ENCODE measurements at regions of chr15 and their contacts with region 1.

Region 1: DNA sequence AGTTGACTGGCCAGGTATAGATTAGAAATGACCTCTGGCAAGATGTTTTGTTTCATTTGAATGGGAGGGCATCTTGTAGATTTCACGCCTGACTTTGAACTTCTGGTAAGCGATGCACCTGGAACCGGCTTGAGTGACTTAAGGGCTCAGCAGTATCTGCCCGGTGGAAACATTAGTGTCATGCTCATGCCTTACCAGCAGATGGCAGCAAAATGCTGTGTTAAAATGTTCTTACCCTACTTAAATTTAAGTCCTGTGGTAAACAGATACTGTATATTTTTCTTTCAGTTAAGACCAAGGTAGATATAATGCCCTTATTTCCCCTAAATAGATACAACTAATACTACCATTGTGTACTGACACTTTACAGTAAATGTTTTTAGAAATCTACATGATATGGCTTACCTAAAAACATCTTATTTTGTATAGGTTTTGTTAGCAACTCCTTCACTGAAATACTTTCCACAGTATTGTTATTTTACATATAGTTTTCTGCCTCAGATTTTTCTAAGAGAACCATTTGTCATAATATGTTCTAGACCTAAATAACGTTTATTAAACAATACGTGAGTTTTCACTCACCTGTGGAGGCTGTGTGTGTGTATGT is 25.5 kb downstream of the ASB7 start:
- DNase-seq: peak; percentile 48
- ATAC-seq: peak; percentile 84
- H3K4me3 ChIP-seq: no peak overlapping the region
- H3K27ac ChIP-seq: no peak overlapping the region
- H3K4me1 ChIP-seq: no peaks in the 10 kb centered on the region
- H3K27me3 ChIP-seq: no peaks in the 10 kb centered on the region
- CTCF ChIP-seq: peak; percentile 79
- EP300 ChIP-seq: no peak
- POLR2A ChIP-seq: no peak
- RAD21 ChIP-seq: peak; percentile 71

Region 2: GRCh38 chr15:100565591-100565990 is 62.3 kb before region 1 on chr15:
- CTCF ChIA-PET with region 1: no interaction called
- POLR2A ChIA-PET with region 1: no interaction called
- in situ Hi-C with region 1: no loop called
- intact Hi-C with region 1: no loop called
- DNase-seq: no peak
- ATAC-seq: no peak
- H3K4me3 ChIP-seq: no peak overlapping the region
- H3K27ac ChIP-seq: no peak overlapping the region
- H3K4me1 ChIP-seq: peaks cover 19% of the 10 kb centered on the region
- H3K27me3 ChIP-seq: no peaks in the 10 kb centered on the region
- CTCF ChIP-seq: no peak
- EP300 ChIP-seq: no peak
- POLR2A ChIP-seq: no peak
- RAD21 ChIP-seq: no peak

Region 3: DNA sequence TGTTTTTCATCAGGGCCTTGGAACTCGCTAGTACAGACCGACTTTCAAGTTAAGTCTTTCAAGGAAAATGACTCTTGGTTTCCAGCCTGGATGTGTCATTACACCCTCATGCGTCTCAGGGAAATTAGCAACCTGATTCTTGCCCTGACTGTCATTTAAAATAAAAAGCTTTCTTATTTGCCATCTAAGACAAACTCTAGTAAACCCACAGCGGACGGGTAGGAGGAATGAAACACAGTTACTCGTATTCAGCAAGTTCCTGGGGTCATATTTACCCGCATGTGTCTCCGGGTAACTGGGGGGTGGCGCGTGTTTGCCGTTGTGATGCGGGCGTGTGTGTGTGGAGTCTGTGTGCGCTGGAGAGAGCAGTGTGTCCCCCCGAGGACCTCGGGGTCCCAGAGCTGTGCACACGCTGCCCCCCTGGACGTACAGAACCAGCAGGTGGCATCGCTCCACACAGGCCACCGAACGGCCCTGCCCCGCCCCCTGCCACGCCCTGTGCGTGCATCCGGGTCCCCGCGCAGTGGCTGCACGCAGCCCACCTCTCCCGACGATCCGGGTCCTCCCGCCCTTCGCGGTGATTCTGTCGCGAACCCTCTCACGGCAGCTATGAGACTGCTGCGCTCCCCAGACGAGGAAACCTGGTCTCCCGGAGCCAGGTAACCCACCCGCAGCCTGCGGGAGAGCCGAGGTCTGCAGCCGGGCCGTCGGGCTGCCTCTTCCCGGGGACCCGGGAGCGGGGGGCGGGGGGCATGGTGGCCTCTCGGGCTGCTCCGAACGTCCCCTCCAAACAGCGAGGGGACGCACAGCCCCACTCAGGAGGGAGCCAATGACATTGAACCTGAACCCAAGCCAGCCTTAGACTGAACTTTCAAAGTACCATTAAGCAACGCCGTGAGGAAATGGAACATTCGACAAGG is 221.6 kb after region 1 on chr15:
- CTCF ChIA-PET with region 1: no interaction called
- POLR2A ChIA-PET with region 1: no interaction called
- in situ Hi-C with region 1: no loop called
- intact Hi-C with region 1: no loop called
- DNase-seq: no peak
- ATAC-seq: no peak
- H3K4me3 ChIP-seq: no peak overlapping the region
- H3K27ac ChIP-seq: no peak overlapping the region
- H3K4me1 ChIP-seq: no peaks in the 10 kb centered on the region; the same call in none of the 2 replicates
- H3K27me3 ChIP-seq: peaks cover 0 to 6% of the 10 kb centered on the region in 2 experiments; a peak in 1 of 5 replicates
- CTCF ChIP-seq: no peak
- EP300 ChIP-seq: no peak
- POLR2A ChIP-seq: no peak
- RAD21 ChIP-seq: no peak

Region 4: DNA sequence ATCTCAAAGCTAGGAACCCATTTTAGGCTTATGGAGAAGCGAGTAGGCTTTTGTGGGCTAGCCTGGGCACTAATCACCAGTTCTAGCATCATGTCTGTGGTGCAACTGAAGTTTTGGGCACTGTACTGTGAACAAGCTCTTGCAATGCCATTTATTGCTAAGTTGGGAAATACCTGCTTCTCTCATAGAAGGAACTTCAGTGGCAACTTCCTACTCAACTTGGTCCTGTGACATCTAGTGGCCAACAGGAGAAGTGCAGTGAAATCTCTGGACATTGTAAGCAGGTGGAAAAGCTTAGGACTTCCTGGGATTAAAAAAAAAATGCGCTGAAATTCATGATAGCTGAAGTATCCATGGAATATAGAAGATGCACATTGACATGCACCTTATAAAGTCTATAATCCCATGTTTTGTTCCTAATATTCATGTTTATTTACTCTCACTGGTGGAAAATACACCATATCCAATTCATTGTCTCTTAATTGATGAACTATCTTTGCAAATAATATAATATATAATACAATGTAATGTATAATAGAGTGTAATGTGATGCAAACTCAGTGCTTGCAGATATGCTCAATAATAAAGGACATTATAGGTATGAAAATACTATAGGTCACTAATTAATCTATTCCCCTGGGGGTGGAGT is 245.3 kb after region 1 on chr15:
- CTCF ChIA-PET with region 1: interaction called, 23 read pairs
- POLR2A ChIA-PET with region 1: no interaction called
- in situ Hi-C with region 1: no loop called
- intact Hi-C with region 1: loop called (anchors 1 kb)
- DNase-seq: peak; percentile 70
- ATAC-seq: peak; percentile 71
- H3K4me3 ChIP-seq: no peak overlapping the region
- H3K27ac ChIP-seq: no peak overlapping the region
- H3K4me1 ChIP-seq: no peaks in the 10 kb centered on the region
- H3K27me3 ChIP-seq: peaks cover 0 to 17% of the 10 kb centered on the region in 2 experiments; a peak in 1 of 5 replicates
- CTCF ChIP-seq: peak; percentile 82
- EP300 ChIP-seq: no peak
- POLR2A ChIP-seq: no peak
- RAD21 ChIP-seq: peak; percentile 49; the same call in 1 of the 2 replicates

Region 5: DNA sequence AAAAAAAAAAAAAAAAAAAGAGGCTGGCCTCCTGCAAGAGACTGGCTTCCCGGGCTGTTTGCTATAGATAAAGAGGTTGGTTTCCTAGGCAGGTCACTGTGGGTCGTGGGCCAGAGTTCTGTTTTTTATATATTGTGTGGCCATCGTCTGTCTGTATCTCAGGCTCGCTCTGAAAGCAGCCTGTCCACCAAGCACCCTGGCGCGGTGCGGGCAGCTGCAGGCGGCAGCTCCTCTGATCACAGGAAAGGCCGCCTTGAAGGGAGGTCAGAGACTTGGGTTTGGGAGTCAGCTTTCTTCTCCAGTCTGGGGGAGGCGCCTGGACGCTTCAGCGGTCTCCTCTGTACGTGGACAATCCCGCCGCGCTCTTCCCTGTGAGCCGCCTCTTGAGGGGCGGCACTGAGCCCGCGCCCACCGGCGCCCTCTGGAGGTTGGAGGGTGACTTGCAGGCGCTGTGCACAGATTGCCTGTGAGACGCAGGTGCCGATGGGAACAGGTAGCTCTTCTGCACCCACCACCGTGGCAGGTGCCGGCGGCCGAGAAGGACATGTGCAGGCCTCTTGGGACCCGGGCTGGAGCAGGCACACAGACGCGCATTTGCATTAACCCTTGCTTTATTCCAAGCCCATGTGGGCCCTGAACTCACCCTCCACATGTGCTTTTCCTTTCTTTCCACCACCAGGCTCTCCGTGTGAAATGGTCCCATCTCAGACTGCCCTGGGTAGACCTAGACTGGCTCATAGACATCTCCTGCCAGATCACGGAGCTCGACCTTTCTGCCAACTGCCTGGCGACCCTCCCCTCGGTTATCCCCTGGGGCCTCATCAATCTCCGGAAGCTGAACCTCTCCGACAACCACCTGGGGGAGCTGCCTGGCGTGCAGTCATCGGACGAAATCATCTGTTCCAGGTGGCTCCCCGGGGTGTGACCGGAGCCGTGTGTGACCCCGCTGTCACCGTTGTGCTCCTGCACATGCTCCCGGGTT is 380.6 kb after region 1 on chr15:
- CTCF ChIA-PET with region 1: interaction called, 15 read pairs
- POLR2A ChIA-PET with region 1: no interaction called
- in situ Hi-C with region 1: no loop called
- intact Hi-C with region 1: loop called (anchors 1 kb)
- DNase-seq: peak; percentile 64
- ATAC-seq: peak; percentile 90
- H3K4me3 ChIP-seq: peak overlapping the region; percentile 65 to 77 (median 68)
- H3K27ac ChIP-seq: no peak overlapping the region
- H3K4me1 ChIP-seq: peaks cover 18% of the 10 kb centered on the region
- H3K27me3 ChIP-seq: peaks cover 6 to 31% of the 10 kb centered on the region in 2 experiments; a peak in 3 of 5 replicates
- CTCF ChIP-seq: peak; percentile 95
- EP300 ChIP-seq: no peak
- POLR2A ChIP-seq: no peak
- RAD21 ChIP-seq: peak; percentile 38; the same call in 1 of the 2 replicates